IMR-90 (cell line): ENCODE measurements at regions of chr6 and their contacts with region 1.

Region 1: DNA sequence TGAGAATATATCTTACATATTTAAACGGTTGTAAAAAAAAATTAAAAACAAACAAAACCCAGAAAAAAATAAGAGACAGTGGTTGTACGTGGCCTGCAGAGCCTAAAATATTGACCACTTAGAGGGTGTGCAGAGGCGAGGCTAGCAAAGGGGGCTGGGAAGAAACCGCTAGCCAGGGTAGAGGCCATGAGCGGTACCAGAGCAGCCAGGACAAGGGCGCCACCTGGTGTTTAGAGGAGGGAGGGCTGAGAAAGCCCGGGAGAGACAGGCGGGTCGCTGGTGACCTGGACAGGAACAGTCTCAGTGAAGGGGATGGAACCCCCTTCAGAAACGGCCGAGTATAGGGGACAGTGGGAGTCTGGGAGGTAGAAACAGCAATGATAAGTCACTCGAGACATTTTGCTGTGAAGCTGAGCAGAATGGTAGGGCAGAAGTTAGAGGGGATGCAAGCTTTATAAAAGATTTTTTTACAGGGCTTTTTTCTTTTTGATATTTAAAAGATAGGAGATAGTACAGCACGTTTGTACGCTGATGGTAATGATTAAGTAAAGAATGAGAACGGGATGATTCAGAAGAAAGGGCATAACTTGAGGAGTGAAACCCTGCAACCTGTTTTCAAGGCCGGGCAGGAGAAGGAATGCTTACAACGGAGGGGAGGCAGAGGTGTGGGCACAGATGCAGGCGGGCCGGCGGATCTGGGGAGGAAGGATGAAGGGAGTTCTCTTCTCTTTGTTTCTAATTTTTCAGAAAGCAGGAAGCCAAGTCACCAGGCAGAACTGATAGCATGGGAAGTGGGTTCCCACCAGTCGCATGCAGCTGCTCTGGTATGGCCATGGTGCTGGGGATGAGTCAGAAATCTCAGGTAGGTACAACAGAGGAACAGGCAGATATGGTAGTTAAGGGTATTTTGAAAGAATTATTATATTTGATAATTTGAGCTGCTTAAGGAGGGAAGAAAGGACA is 76.2 kb downstream of the FAM229B start:
- DNase-seq: peak; percentile 31
- ATAC-seq: peak; percentile 57
- H3K4me3 ChIP-seq: no peak overlapping the region
- H3K27ac ChIP-seq: no peak overlapping the region
- H3K4me1 ChIP-seq: no peaks in the 10 kb centered on the region
- H3K27me3 ChIP-seq: no peaks in the 10 kb centered on the region
- CTCF ChIP-seq: peak; percentile 67
- POLR2A ChIP-seq: no peak
- RAD21 ChIP-seq: peak; percentile 84

Region 2: DNA sequence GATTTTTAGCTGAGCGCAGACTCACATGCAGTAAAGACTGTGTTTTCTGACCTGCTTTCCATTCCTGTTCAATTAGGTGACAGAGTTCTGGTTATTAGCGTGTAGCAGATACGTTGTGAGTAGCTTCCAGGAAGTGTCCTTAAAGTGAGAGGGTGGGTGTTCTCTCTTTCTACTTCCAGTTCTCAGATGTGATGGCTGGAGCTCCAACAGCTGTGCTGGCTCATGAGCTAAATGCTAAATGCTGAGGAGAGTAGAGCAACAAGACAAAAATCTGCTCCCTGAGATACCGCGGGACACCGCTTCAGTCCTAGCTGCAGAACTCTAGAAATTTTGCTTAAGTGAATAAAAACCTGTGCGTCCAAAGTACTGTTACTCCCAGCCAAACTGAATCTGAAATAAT is 252.1 kb before region 1 on chr6:
- CTCF ChIA-PET with region 1: no interaction called
- POLR2A ChIA-PET with region 1: no interaction called
- dilution Hi-C with region 1: no loop called
- in situ Hi-C with region 1: no loop called
- intact Hi-C with region 1: no loop called
- DNase-seq: no peak
- ATAC-seq: no peak
- H3K4me3 ChIP-seq: no peak overlapping the region
- H3K27ac ChIP-seq: no peak overlapping the region
- H3K4me1 ChIP-seq: no peaks in the 10 kb centered on the region
- H3K27me3 ChIP-seq: no peaks in the 10 kb centered on the region; the same call in 1 of the 2 replicates
- CTCF ChIP-seq: no peak
- POLR2A ChIP-seq: no peak
- RAD21 ChIP-seq: no peak

Region 3: GRCh38 chr6:112087136-112087911 is 76.3 kb before region 1 on chr6 and contains the starts of genes FAM229B and TUBE1:
- CTCF ChIA-PET with region 1: interaction called, 13 read pairs
- POLR2A ChIA-PET with region 1: no interaction called
- dilution Hi-C with region 1: no loop called
- in situ Hi-C with region 1: no loop called
- intact Hi-C with region 1: loop called (anchors 2 kb)
- DNase-seq: peak; percentile 98
- ATAC-seq: peak; percentile 99
- H3K4me3 ChIP-seq: peak within 1 kb of the TSS; percentile 69
- H3K27ac ChIP-seq: peak within 1 kb of the TSS; percentile 65
- H3K4me1 ChIP-seq: no peaks in the 10 kb centered on the region
- H3K27me3 ChIP-seq: no peaks in the 10 kb centered on the region
- CTCF ChIP-seq: 0 out of 2 replicates have a peak, but pooled peaks have one; percentile 8
- POLR2A ChIP-seq: peak; percentile 69
- RAD21 ChIP-seq: 0 out of 2 replicates have a peak, but pooled peaks have one; percentile 3
- total RNA-seq, gene FAM229B: 8.6 and 11.4 TPM in 2 replicates
- total RNA-seq, gene TUBE1: 8.6 and 10.0 TPM in 2 replicates

Region 4: DNA sequence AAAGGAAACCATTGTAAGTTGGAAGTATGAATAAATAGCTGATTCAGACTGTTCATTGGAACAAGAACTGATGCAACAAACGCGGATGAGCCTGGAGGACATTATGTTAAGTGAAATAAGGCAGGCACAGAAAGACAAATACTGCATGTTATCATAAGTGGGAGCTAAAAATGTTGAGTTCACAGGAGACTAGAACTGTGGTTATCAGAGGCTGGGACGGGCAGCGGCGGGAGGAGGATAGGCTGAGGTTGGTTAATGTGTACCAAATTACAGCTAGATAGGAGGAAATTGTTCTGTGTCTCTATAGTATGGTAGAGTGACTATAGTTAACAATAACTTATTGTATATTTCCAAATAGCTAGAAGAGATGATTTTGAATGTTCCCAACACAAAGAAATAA is 35.4 kb before region 1 on chr6:
- CTCF ChIA-PET with region 1: no interaction called
- POLR2A ChIA-PET with region 1: no interaction called
- dilution Hi-C with region 1: no loop called
- in situ Hi-C with region 1: no loop called
- intact Hi-C with region 1: no loop called
- DNase-seq: no peak
- ATAC-seq: no peak
- H3K4me3 ChIP-seq: no peak overlapping the region
- H3K27ac ChIP-seq: no peak overlapping the region
- H3K4me1 ChIP-seq: no peaks in the 10 kb centered on the region
- H3K27me3 ChIP-seq: no peaks in the 10 kb centered on the region
- CTCF ChIP-seq: no peak
- POLR2A ChIP-seq: no peak
- RAD21 ChIP-seq: no peak

Region 5: GRCh38 chr6:112237595-112237994 is 74.0 kb after region 1 on chr6:
- CTCF ChIA-PET with region 1: no interaction called
- POLR2A ChIA-PET with region 1: no interaction called
- dilution Hi-C with region 1: no loop called
- in situ Hi-C with region 1: no loop called
- intact Hi-C with region 1: no loop called
- DNase-seq: peak; percentile 92
- ATAC-seq: peak; percentile 16
- H3K4me3 ChIP-seq: no peak overlapping the region
- H3K27ac ChIP-seq: peak overlapping the region; percentile 75; the same call in 1 of the 2 replicates
- H3K4me1 ChIP-seq: peaks cover 12% of the 10 kb centered on the region
- H3K27me3 ChIP-seq: no peaks in the 10 kb centered on the region
- CTCF ChIP-seq: no peak
- POLR2A ChIP-seq: no peak
- RAD21 ChIP-seq: no peak

Region 6: DNA sequence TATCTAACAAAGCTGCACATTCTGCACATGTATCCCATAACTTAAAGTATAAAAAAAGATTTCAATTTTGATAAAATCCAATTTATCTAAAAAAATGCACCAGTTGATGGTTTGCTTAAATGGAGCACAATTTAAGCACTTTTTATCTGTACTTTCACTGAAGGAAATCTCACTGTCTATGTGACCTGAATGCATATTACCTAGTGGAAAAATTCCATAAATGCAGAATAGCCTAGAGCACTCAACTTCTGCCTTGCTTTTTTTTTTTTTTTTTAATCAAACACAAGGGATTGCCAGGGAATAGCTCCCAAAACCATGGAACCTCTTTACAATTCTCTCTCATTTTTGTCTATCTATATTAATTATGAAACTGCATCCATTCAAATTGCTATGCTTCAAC is 263.9 kb after region 1 on chr6:
- CTCF ChIA-PET with region 1: no interaction called
- POLR2A ChIA-PET with region 1: no interaction called
- dilution Hi-C with region 1: no loop called
- in situ Hi-C with region 1: no loop called
- intact Hi-C with region 1: no loop called
- DNase-seq: no peak
- ATAC-seq: no peak
- H3K4me3 ChIP-seq: no peak overlapping the region
- H3K27ac ChIP-seq: no peak overlapping the region
- H3K4me1 ChIP-seq: no peaks in the 10 kb centered on the region
- H3K27me3 ChIP-seq: no peaks in the 10 kb centered on the region
- CTCF ChIP-seq: no peak
- POLR2A ChIP-seq: no peak
- RAD21 ChIP-seq: no peak